MCF 10A (cell line): ENCODE measurements at regions of chr4 and their contacts with region 1.

Region 1: GRCh38 chr4:128553686-128554515 is 255.6 kb upstream of the JADE1 start:
- DNase-seq: peak; percentile 25
- H3K4me3 Mint-ChIP-seq: peak overlapping the region; percentile 77
- H3K27ac Mint-ChIP-seq: peak overlapping the region; percentile 98
- H3K4me1 Mint-ChIP-seq: peaks cover 11% of the 10 kb centered on the region
- H3K27me3 Mint-ChIP-seq: no peaks in the 10 kb centered on the region
- CTCF ChIP-seq: no peak

Region 2: GRCh38 chr4:127896528-127896927 is 657.4 kb before region 1 on chr4:
- CTCF ChIA-PET with region 1: no interaction called
- POLR2A ChIA-PET with region 1: no interaction called
- intact Hi-C with region 1: no loop called
- DNase-seq: no peak
- H3K4me3 Mint-ChIP-seq: no peak overlapping the region
- H3K27ac Mint-ChIP-seq: no peak overlapping the region
- H3K4me1 Mint-ChIP-seq: no peaks in the 10 kb centered on the region
- H3K27me3 Mint-ChIP-seq: no peaks in the 10 kb centered on the region
- CTCF ChIP-seq: no peak

Region 3: DNA sequence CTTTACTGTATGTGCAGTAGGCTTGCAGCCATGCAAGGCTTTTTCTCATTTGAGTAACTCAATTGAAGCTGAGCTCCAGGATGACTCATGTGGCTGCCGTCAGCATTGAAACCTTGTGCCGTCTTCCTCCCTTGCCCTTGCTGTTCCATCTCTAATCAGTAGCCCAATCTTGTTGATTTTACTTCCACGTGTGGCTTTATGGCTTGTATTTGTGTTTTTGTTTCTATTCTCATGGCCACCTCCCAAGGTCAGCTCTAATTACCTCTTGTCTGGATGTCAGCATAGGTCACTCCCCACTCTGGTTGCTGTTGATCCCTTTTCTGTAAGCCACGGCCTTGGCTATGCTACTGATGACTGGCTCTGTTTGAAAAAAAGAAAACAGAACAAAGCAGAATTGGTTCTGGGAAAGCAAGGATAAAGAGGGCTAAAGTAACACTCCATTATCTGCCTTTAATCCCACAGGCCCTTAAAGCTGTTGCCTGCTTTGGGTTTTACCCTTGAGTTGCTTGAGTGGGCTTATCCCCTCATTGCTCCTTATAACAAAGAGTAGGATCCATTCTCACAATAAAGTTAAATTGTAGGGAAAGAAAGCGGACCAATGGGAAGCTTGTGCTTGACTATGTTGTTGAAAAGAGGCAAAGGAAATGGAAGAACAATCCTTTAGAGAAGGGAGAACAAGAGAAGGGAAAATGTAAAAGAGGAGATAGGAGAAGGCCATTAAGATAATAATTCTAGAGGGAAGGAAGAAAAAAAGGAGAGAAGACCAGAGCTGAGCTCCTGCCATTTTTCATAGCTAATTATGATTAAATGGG is 92.4 kb before region 1 on chr4:
- CTCF ChIA-PET with region 1: interaction called, 52 read pairs
- POLR2A ChIA-PET with region 1: interaction called, 13 read pairs
- intact Hi-C with region 1: no loop called
- DNase-seq: peak; percentile 75
- H3K4me3 Mint-ChIP-seq: no peak overlapping the region
- H3K27ac Mint-ChIP-seq: no peak overlapping the region
- H3K4me1 Mint-ChIP-seq: no peaks in the 10 kb centered on the region
- H3K27me3 Mint-ChIP-seq: no peaks in the 10 kb centered on the region
- CTCF ChIP-seq: no peak

Region 4: GRCh38 chr4:128468123-128468989 is 85.5 kb before region 1 on chr4:
- CTCF ChIA-PET with region 1: no interaction called
- POLR2A ChIA-PET with region 1: interaction called, 6 read pairs
- intact Hi-C with region 1: loop called (anchors 1 kb)
- DNase-seq: peak; percentile 83
- H3K4me3 Mint-ChIP-seq: no peak overlapping the region
- H3K27ac Mint-ChIP-seq: peak overlapping the region; percentile 73
- H3K4me1 Mint-ChIP-seq: peaks cover 10% of the 10 kb centered on the region
- H3K27me3 Mint-ChIP-seq: no peaks in the 10 kb centered on the region
- CTCF ChIP-seq: no peak

Region 5: GRCh38 chr4:128517739-128518510 is 36.0 kb before region 1 on chr4:
- CTCF ChIA-PET with region 1: interaction called, 7 read pairs
- POLR2A ChIA-PET with region 1: interaction called, 5 read pairs
- intact Hi-C with region 1: loop called (anchors 2 kb)
- DNase-seq: peak; percentile 93
- H3K4me3 Mint-ChIP-seq: peak overlapping the region; percentile 7
- H3K27ac Mint-ChIP-seq: peak overlapping the region; percentile 90
- H3K4me1 Mint-ChIP-seq: peaks cover 48% of the 10 kb centered on the region
- H3K27me3 Mint-ChIP-seq: no peaks in the 10 kb centered on the region
- CTCF ChIP-seq: no peak

Region 6: GRCh38 chr4:128528793-128529553 is 24.9 kb before region 1 on chr4:
- CTCF ChIA-PET with region 1: interaction called, 5 read pairs
- POLR2A ChIA-PET with region 1: interaction called, 18 read pairs
- intact Hi-C with region 1: loop called (anchors 2 kb)
- DNase-seq: peak; percentile 93
- H3K4me3 Mint-ChIP-seq: no peak overlapping the region
- H3K27ac Mint-ChIP-seq: peak overlapping the region; percentile 52
- H3K4me1 Mint-ChIP-seq: peaks cover 26% of the 10 kb centered on the region
- H3K27me3 Mint-ChIP-seq: no peaks in the 10 kb centered on the region
- CTCF ChIP-seq: no peak

Region 7: DNA sequence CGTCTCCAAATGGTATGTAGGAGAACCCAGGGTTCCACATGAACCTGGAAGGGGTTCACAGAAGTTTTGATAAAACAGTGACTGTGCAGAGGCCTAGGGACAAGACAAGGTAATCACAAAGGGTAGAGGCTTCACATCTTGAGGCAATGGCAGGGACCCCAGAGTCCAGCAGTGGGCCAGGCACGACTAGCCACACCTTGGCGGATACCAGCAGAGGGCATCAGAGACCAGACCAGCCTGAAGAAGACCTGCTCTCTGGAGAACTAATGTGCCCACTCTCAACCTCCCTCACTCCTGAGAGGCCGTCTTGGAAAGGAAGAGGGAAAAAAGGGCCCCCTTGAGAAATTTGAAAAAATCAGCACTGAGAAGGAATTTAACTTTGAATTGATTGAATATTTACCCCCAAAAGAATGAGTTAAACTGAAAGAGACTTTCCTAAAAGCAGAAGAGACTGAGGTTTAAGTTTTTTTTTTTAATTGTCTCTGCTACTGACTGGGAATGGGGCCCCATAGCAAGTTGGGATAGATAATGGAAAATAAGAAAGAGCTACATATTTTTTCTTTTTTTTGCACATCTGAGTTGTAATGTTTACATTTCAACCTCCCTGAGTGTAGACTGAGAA is 11.8 kb after region 1 on chr4:
- CTCF ChIA-PET with region 1: interaction called, 36 read pairs
- POLR2A ChIA-PET with region 1: interaction called, 6 read pairs
- intact Hi-C with region 1: no loop called
- DNase-seq: peak; percentile 61
- H3K4me3 Mint-ChIP-seq: no peak overlapping the region
- H3K27ac Mint-ChIP-seq: peak overlapping the region; percentile 13
- H3K4me1 Mint-ChIP-seq: peaks cover 17% of the 10 kb centered on the region
- H3K27me3 Mint-ChIP-seq: no peaks in the 10 kb centered on the region
- CTCF ChIP-seq: peak; percentile 59

Region 8: GRCh38 chr4:128600996-128601871 is 47.3 kb after region 1 on chr4:
- CTCF ChIA-PET with region 1: interaction called, 10 read pairs
- POLR2A ChIA-PET with region 1: interaction called, 18 read pairs
- intact Hi-C with region 1: no loop called
- DNase-seq: peak; percentile 99
- H3K4me3 Mint-ChIP-seq: peak overlapping the region; percentile 53
- H3K27ac Mint-ChIP-seq: peak overlapping the region; percentile 84
- H3K4me1 Mint-ChIP-seq: peaks cover 64% of the 10 kb centered on the region
- H3K27me3 Mint-ChIP-seq: no peaks in the 10 kb centered on the region
- CTCF ChIP-seq: no peak

Region 9: DNA sequence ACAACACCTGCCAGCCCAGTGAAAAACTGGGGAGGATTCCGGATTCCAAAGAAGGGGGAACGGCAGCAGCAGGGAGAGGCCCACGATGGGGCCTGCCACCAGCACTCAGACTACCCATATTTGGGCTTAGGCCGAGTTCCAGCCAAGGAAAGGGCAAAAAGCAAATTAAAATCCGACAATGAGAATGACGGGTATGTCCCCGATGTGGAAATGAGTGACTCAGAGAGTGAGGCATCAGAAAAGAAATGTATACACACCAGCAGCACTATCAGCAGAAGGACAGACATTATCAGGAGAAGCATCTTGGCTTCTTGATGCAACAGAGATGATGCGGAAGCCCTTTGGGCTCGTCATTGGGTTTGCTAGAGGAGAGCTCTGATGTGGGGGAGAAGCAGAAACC is 318.0 kb after region 1 on chr4:
- CTCF ChIA-PET with region 1: no interaction called
- POLR2A ChIA-PET with region 1: no interaction called
- intact Hi-C with region 1: no loop called
- DNase-seq: peak; percentile 87
- H3K4me3 Mint-ChIP-seq: no peak overlapping the region
- H3K27ac Mint-ChIP-seq: peak overlapping the region; percentile 73
- H3K4me1 Mint-ChIP-seq: peaks cover 18% of the 10 kb centered on the region
- H3K27me3 Mint-ChIP-seq: no peaks in the 10 kb centered on the region
- CTCF ChIP-seq: no peak